ENCODE measurements at regions of chr4 and their contacts with region 1.

Region 1: DNA sequence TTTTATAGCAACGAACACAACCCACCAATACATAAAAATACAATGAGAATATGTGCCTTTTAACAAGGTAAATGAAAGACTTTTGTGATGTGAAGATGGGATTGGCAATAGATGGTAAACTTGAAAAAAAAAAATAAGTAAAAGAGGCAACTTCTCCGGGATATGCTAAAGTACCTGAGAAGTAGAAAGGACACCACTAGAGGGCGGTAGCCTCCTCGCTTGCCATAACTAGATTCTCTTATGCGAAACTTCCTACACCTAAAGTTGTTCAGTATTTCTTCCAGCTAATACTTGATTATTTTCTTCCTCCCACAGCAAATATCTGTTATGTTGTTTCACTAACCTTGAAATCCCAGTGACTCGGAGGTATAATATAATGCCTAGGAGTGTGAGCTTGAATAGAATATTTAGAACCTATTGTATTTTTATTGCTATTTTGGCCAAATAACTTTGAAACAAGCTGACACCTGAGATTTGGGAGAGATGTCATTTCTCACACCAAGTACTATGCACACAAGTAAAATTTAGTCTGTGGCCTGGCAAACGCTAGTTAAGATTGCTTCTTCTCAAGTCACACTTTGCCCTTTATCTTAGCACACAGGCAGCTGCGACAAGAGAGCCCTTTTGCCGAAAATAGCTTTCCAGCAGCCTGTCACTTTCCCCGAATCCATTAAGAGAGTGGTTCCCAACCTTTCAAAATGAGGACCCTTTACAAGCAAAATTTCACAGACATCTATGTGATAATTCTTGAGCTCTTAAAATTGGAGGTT is 44.9 kb upstream of the PDLIM5 start:
- DNase-seq: peak in 1 of 2 donors; percentile 91
- H3K4me3 ChIP-seq: peak overlapping the region in 1 of 2 donors; percentile 57
- H3K27ac ChIP-seq: peak overlapping the region; percentile 80 to 82
- H3K4me1 ChIP-seq: peaks cover 10 to 26% of the 10 kb centered on the region in 2 donors
- H3K27me3 ChIP-seq: no peaks in the 10 kb centered on the region
- CTCF ChIP-seq: peak; percentile 34 to 88 (median 86)

Region 2: GRCh38 chr4:94504545-94504944 is 97.7 kb after region 1 on chr4:
- intact Hi-C with region 1: no loop called
- DNase-seq: no peak
- H3K4me3 ChIP-seq: no peak overlapping the region
- H3K27ac ChIP-seq: peak overlapping the region; percentile 43 to 60
- H3K4me1 ChIP-seq: peaks cover 12 to 80% of the 10 kb centered on the region in 2 donors
- H3K27me3 ChIP-seq: no peaks in the 10 kb centered on the region
- CTCF ChIP-seq: no peak

Region 3: GRCh38 chr4:94595879-94596483 is 189.1 kb after region 1 on chr4:
- intact Hi-C with region 1: loop called (anchors 2 kb)
- DNase-seq: no peak
- H3K4me3 ChIP-seq: no peak overlapping the region
- H3K27ac ChIP-seq: no peak overlapping the region
- H3K4me1 ChIP-seq: peaks cover 0 to 8% of the 10 kb centered on the region in 2 donors
- H3K27me3 ChIP-seq: no peaks in the 10 kb centered on the region
- CTCF ChIP-seq: peak; percentile 46 to 65 (median 53)

Region 4: GRCh38 chr4:95095348-95095974 is 688.6 kb after region 1 on chr4:
- intact Hi-C with region 1: loop called (anchors 10 kb)
- DNase-seq: no peak
- H3K4me3 ChIP-seq: no peak overlapping the region
- H3K27ac ChIP-seq: no peak overlapping the region
- H3K4me1 ChIP-seq: peaks cover 0 to 4% of the 10 kb centered on the region in 2 donors
- H3K27me3 ChIP-seq: no peaks in the 10 kb centered on the region
- CTCF ChIP-seq: peak; percentile 34 to 70 (median 69)